Cardiac septum (tissue), 1 donor: ENCODE measurements at regions of chr4 and their contacts with region 1.

Region 1: GRCh38 chr4:103091601-103092223 is 7.9 kb downstream of the BDH2 start:
- DNase-seq: no peak

Region 2: GRCh38 chr4:102430461-102430910 is 661.2 kb before region 1 on chr4:
- intact Hi-C with region 1: loop called (anchors 5 kb)
- DNase-seq: no peak

Region 3: GRCh38 chr4:102598086-102598761 is 493.5 kb before region 1 on chr4:
- intact Hi-C with region 1: no loop called
- DNase-seq: no peak

Region 4: DNA sequence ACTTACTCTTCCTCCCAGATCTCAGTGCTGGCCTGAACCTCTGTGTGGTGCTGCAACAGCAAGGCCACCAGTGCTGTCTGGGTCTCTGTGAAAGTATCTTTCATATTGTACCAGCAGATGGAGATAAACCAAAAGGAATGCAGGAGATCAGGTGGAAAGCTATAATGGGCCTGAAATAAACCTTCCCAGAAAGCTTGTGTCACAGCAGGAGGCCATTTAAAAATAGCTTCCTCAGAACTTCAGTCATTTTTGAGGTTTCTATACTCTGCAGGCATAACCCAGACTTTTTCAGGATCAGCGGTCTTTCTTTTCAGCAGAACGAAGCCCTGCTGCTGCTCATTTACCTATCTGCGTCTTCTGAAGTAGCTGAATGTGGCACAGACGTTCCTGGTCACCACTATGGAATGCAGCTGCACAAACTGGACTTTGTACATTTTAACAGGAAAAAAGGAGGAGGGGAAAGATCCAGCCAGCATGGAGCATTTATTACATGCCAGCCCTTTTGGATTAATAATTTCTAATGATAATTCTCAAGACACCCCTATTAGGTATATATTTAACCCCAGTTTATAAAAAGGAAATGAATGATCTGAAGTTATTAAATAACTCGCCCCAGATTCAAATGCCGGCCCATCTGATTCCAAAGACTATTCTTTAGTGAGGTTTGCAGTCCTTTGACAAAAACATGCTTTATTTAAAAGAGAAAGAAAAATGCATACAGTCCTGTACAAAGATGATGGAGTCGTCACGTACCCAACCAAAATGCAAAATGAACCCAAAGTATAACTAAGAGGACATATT is 470.8 kb before region 1 on chr4:
- intact Hi-C with region 1: loop called (anchors 5 kb)
- DNase-seq: no peak

Region 5: GRCh38 chr4:103198111-103198765 is 106.5 kb after region 1 on chr4 and contains the start of gene CENPE:
- intact Hi-C with region 1: no loop called
- DNase-seq: peak; percentile 91
- total RNA-seq, gene CENPE: 0.70 TPM